OCI-LY7 (cell line): ENCODE measurements at regions of chr2 and their contacts with region 1.

Region 1: GRCh38 chr2:78999406-78999805 is 26.1 kb upstream of the REG3G start:
- DNase-seq: peak; percentile 65
- H3K4me3 ChIP-seq: no peak overlapping the region
- H3K27ac ChIP-seq: no peak overlapping the region
- H3K4me1 ChIP-seq: peaks cover 17% of the 10 kb centered on the region
- CTCF ChIP-seq: peak; percentile 82

Region 2: DNA sequence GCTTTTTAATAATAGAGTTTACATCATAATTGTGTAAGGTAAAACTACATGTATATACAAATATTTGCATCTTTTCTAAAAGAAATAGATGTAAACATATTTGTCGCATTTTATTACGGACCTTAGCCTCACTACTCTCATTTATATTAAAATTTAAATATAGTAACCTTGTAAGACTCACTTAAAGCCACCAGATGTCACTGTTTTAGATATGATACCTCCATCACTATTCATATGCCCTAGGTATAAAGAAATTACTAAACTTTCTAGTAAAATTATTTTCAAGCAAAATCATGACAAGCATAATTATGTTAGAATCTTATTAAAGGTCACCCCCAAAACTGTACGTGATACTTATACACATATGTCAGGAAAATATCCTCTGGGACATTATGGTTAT is 648.2 kb before region 1 on chr2:
- CTCF ChIA-PET with region 1: no interaction called
- POLR2A ChIA-PET with region 1: interaction called, 4 read pairs
- intact Hi-C with region 1: loop called (anchors 5 kb)
- DNase-seq: peak; percentile 35
- H3K4me3 ChIP-seq: no peak overlapping the region
- H3K27ac ChIP-seq: no peak overlapping the region
- H3K4me1 ChIP-seq: no peaks in the 10 kb centered on the region
- CTCF ChIP-seq: peak; percentile 73

Region 3: DNA sequence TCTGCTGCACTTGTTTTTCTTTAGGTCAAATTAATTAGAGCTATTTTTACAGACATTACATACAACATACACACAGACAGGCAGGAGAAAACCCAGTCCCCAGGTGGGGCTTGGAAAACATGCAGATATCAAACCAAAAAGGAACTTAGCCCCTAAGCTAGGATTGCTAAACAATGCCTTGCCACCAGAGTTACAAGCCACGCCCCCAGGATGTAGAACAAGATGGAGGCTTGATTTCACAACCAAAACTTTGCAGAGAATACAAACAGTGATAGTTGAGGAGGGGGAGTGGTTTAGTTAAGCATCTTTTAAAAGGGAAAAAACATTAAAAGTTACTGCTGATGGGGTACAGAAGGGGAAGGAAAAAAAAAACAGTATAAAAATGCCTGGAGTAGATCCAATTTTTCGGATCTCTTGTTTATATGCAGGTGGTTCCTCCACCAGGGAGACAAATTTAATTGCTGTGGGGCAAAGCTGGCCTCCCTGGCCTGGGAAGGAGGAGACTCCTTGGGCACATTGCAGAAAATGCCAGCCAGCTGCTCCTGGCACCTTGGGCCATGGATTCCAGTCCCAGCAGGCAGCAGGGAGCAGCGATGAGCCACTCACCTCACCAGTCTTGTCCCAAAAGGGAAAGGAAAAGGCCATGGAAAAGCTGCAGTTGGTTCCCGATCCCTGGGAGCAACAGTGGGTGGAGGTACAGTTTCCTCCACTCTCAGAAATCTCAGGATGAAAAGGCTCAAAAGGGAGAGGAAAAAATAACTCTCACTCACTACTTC is 322.3 kb before region 1 on chr2:
- CTCF ChIA-PET with region 1: no interaction called
- POLR2A ChIA-PET with region 1: no interaction called
- intact Hi-C with region 1: loop called (anchors 1 kb)
- DNase-seq: peak; percentile 10
- H3K4me3 ChIP-seq: no peak overlapping the region
- H3K27ac ChIP-seq: no peak overlapping the region
- H3K4me1 ChIP-seq: no peaks in the 10 kb centered on the region
- CTCF ChIP-seq: no peak

Region 4: GRCh38 chr2:79131687-79132086 is 132.3 kb after region 1 on chr2:
- CTCF ChIA-PET with region 1: no interaction called
- POLR2A ChIA-PET with region 1: no interaction called
- intact Hi-C with region 1: no loop called
- DNase-seq: no peak
- H3K4me3 ChIP-seq: no peak overlapping the region
- H3K27ac ChIP-seq: no peak overlapping the region
- H3K4me1 ChIP-seq: no peaks in the 10 kb centered on the region
- CTCF ChIP-seq: 0 out of 2 replicates have a peak, but pooled peaks have one; percentile 12